GM10248 (cell line): ENCODE measurements at regions of chr5 and their contacts with region 1.

Region 1: DNA sequence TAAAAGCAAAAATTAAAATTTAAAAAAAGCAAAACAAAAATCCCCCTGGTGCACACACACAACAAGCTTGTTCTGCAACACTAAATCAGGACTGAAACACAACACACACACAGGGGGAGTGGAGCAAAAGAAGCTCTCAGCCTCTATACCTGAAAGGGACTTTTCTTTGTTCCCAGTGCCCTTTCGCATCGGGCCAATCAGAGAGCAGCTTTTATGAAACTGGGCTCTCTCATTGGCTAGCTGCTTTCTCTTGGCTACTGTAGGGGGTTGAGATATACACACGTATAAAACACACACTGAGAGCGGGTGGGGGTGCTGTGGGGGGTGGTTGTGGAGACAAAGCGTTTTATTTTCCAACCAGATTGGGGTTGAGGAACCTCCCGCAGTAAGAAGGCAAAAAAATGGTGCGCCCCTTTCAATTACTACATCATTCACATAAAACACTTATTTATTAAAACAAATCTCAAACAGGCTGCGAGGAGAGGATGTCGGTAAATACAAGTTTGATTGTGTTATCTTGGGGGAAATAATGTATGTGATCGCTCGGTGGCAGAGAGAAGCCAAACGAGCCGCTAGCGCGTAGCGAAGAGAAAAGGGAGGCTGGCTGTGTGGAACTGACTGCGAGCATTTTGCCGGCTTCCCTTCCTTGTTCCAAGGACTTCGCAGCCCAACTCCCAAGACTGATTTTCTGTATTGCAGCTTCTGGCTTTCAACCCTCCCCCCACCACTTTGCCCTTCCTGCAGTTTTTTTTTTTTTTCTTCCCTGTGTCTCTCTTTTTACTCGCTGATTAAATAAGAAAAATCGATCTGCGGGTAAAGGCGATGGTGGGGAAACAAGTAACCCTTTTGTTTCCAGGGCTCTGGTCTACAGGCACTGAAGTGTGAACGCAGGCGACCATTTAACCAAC is 2.5 kb upstream of the ZNF608 start:
- DNase-seq: peak; percentile 84
- CTCF ChIP-seq: no peak

Region 2: GRCh38 chr5:124725040-124725434 is 23.9 kb before region 1 on chr5:
- CTCF ChIA-PET with region 1: interaction called, 10 read pairs
- POLR2A ChIA-PET with region 1: interaction called, 3 read pairs
- DNase-seq: no peak
- CTCF ChIP-seq: peak; percentile 14

Region 3: DNA sequence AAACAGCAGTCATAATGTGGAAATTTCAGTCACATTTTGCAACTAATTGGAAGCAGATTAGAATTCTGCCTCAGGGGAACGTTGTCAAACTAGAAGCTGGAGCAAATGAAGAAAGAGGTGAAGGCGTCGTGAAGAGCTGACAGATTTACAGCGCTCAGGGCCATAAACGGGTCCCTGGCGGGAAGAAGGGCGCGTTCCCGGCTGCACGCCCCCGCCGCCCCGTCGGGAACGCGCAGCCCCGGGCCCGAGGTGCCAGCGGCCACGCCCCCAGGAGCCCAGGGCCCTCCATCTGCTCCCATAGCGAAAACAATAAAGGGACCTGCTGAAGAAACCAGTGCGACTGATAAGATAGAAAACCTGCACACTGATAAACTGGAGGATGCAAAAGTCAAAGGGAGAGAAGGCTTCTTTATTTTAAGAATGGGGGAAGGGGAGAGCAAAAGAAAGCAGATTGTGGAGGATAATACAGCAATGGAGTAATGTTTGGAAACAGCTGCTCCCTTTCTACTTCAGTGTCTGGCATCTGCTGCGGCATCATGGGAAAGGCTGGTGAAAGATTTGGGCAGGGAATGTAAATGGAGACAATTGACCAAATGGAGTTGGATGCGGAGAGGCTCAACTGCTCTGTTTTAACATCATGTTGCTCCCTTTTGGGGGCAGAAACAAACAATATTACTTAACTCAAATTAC is 13.6 kb before region 1 on chr5:
- CTCF ChIA-PET with region 1: interaction called, 14 read pairs
- POLR2A ChIA-PET with region 1: interaction called, 7 read pairs
- DNase-seq: no peak
- CTCF ChIP-seq: no peak

Region 4: DNA sequence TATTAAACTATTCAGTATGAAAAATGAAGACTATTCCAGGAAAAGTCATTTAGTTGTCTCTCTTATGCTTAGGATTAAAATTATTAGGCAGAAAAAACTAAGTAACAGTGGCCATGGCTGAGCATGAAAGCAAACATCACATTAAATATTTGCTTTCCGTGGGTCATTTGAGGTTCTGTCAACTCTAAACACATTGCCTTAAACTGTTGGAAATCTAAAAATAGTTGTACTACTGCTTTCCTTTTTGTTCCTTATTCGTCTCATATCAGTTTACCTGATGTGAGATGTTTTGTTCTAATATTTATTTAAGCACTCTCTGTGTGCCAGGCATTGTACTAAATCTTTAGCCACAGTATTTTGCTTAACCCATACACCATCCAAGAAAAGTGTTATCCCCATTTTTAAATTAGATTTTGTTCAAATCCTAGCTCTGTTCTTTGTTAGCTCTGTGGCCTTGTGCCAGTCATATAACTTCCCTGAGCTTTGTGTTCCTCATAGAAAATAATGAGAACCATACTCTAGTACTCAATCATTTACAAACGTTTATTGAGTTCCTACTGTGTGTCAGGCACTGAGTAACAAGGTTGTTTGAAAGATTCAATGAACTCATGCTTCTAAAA is 16.2 kb after region 1 on chr5:
- CTCF ChIA-PET with region 1: interaction called, 25 read pairs
- POLR2A ChIA-PET with region 1: no interaction called
- DNase-seq: no peak
- CTCF ChIP-seq: no peak

Region 5: GRCh38 chr5:124806373-124807077 is 57.6 kb after region 1 on chr5:
- CTCF ChIA-PET with region 1: no interaction called
- POLR2A ChIA-PET with region 1: no interaction called
- DNase-seq: no peak
- CTCF ChIP-seq: no peak

Region 6: GRCh38 chr5:125277494-125278154 is 528.7 kb after region 1 on chr5:
- CTCF ChIA-PET with region 1: no interaction called
- POLR2A ChIA-PET with region 1: no interaction called
- DNase-seq: no peak
- CTCF ChIP-seq: no peak